Right ventricle myocardium inferior (tissue), 1 donor: ENCODE measurements at regions of chr11 and their contacts with region 1.

Region 1: DNA sequence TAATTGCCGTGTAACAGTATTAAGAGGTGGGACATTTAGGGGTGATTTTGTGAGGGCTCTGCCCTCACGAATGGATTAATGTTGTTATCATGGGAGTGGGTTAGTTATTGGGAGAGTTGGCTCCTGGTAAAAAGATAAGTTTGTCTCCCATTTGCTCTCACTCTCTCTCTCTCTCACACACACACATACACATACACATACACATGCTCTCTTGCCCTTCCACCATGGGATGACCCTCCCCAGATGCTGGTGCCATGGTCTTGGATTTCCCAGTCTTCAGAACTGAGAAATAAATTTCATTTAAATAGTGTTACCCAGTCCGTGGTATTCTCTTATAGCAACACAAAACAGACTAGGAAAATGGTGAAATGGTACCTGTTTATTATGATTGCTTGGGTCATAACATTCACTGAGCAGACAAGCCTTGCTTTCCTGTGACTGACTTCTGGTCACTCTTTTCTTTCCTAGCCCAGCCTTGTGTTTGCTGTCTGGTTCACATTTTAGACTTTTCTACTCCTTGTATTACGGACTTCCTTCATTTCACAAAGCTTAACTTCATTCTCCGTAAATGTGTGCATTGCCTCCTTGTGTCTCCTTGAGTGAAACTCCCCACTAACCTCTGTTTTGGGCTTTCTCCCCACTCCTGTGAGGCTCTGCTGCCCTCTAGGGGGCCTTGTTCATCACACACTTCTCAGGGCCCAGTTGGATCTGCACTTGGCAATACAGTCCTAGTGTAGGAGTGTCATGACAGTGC is 206.5 kb upstream of the CTSC start:
- DNase-seq: peak; percentile 67
- ATAC-seq: peak; percentile 97

Region 2: DNA sequence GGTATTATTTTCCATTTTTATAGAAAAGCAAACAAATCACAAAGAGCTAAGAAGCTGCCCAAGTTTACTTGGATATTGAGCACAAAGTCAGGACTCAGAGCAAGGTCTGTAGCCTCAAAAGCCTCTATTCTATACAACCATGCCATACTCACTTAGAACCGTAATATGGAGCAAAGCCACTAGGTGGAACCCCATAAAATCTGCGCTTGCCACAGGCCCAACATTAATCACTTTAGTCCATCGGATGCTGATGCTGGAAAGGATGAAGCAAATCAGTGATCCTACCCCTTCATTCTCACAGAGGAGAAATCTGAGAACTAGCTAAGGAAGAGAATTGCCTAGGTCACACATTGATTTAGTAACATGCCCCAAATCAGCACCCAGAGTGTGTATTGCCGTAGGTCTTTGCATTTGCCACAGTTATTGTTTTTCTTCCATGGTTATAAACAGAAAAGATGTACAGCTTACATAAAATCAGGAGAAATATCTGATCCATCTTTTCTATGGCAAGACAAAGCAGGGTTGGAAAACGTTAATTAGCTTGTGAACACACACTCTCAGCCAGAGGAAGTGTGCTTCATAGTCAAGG is 312.1 kb before region 1 on chr11:
- intact Hi-C with region 1: loop called (anchors 5 kb)
- DNase-seq: no peak
- ATAC-seq: no peak

Region 3: GRCh38 chr11:88345408-88345807 is 198.7 kb before region 1 on chr11:
- intact Hi-C with region 1: no loop called
- DNase-seq: no peak
- ATAC-seq: no peak

Region 4: DNA sequence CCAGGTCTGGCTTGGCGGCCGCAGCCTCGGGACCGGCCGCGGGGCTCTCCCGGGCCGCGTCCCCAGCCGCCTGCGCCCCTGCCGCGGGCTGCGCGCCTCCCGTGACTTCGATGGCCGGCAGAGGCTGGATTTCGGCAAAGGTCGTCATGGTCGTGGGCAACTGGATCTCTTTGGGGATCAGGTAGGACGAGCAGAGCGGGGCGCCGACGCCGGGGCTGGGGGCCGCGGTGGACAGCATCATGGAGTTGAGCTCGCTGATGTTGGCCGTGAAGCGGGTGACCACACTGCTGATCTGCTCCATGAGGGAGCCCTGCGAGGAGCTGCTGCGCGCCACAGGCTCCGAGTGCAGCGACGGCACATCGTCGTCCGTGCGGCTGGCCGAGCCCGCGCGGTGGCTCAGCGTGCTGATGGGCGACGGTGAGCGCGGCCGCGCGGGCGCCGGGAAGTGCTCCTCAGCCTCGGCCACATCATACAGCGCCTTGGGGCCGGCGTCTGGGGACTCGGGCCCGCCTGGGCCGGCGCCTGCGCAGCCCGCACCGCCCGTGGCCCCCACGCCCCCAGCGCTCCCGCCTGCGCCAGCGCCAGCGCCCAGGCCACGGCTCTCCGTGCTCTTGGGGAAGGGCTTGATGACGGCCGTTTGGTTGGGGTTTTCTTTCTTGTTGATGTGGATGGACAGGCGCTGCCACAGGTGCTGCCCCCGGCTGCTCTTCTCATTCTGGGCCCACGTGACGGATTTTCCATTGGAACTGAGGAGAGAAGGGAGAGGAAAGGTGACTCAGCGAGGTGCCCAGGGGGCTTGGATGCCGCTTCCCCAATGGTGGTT is 35.1 kb before region 1 on chr11:
- intact Hi-C with region 1: no loop called
- DNase-seq: peak; percentile 72
- ATAC-seq: peak; percentile 60

Region 5: DNA sequence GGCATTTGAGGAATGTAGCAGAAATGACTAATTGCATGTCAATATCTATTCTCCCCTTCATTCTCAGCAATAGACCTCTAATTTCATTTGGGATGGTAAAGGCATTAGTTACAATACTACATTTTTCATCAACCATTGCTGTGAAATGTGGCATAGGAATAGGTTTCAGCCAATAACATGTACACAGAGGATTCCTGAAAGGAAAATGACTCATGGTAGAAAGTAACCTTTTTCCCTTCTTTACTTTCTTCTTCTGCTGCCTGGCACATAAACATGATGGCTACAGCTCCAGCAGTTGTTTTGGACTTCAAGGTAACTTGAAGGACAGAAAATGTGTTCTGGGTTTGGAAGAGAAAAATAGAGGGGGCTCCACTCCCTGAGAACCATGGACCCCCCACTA is 25.3 kb after region 1 on chr11:
- intact Hi-C with region 1: no loop called
- DNase-seq: no peak
- ATAC-seq: no peak

Region 6: GRCh38 chr11:88644724-88645123 is 100.6 kb after region 1 on chr11:
- intact Hi-C with region 1: no loop called
- DNase-seq: no peak
- ATAC-seq: no peak